HCT116 (cell line): ENCODE measurements at regions of chr22 and their contacts with region 1.

Region 1: DNA sequence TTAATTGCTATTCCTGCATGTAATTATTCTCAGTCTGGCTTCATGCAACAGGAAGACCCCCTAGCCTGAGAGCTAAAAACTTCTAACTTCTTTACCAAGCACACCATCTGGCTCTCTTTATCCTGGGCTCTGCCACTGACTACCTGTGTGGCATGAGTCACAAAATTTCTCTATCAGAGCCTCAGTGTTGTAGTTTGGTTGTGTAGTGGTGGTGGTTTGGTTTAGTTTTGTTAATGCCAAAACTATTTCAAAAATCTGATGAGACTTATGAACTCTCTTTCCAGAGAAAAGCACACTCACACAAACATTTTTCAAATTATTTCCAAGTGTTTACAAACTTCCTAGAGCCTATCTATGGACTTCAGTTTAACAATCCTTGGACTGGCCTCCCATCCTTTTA is 7.5 kb upstream of the IL17RA start:
- DNase-seq: no peak
- ATAC-seq: no peak; the same call in 1 of the 2 replicates
- H3K4me3 ChIP-seq: no peak overlapping the region
- H3K27ac ChIP-seq: no peak overlapping the region
- H3K4me1 ChIP-seq: peaks cover 9 to 24% of the 10 kb centered on the region in 2 experiments
- H3K27me3 ChIP-seq: no peaks in the 10 kb centered on the region
- CTCF ChIP-seq: no peak
- POLR2A ChIP-seq: no peak
- RAD21 ChIP-seq: no peak

Region 2: DNA sequence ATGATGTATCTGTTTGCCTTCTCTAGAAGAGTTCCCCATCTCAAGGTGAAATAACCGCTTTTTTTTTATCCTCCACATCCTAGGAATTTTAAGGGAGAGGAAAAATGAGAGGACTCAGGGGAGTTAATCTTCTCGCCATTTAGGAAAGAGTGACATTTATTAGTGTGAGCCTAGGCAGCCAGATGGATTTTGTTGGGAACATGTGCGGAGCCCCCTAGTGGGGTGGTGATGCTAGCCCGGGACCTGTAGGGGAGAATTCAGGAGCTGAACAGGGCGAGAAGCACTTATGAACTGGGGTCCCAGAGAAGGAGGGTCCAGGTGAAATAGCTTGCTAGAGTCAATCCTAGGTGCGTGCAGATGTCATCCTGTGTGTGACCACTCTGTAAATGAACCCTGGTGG is 18.3 kb after region 1 on chr22:
- CTCF ChIA-PET with region 1: interaction called, 10 read pairs
- POLR2A ChIA-PET with region 1: no interaction called
- RAD21 ChIA-PET with region 1: interaction called in 1 of 2 experiments, 4 read pairs
- intact Hi-C with region 1: no loop called
- DNase-seq: no peak
- ATAC-seq: peak; percentile 85
- H3K4me3 ChIP-seq: no peak overlapping the region
- H3K27ac ChIP-seq: no peak overlapping the region
- H3K4me1 ChIP-seq: no peaks in the 10 kb centered on the region
- H3K27me3 ChIP-seq: no peaks in the 10 kb centered on the region
- CTCF ChIP-seq: peak in 2 of 3 experiments; percentile 58 to 64; a peak in 4 of 6 replicates
- POLR2A ChIP-seq: no peak
- RAD21 ChIP-seq: no peak

Region 3: DNA sequence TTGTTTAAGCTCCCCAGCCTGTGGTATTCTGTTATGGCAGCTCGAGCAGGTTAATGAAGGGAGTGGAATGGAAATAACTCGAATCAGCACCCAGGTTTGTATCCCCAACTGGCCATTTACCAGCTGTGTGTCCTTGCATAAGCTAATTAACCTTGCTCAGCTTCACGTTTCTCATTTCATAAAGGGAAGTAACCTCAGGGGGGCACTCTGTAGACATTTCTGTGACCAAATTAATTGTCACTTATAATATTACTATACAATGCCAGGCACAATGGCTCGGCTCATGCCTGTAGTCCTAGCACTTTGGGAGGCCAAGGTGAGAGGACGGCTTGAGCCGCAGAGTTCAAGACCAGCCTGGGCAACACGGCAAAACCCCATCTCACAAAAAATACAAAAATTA is 128.2 kb after region 1 on chr22:
- CTCF ChIA-PET with region 1: interaction called, 14 read pairs
- POLR2A ChIA-PET with region 1: no interaction called
- RAD21 ChIA-PET with region 1: no interaction called
- intact Hi-C with region 1: no loop called
- DNase-seq: no peak
- ATAC-seq: peak; percentile 83
- H3K4me3 ChIP-seq: no peak overlapping the region
- H3K27ac ChIP-seq: no peak overlapping the region
- H3K4me1 ChIP-seq: no peaks in the 10 kb centered on the region
- H3K27me3 ChIP-seq: no peaks in the 10 kb centered on the region
- CTCF ChIP-seq: peak; percentile 5 to 28 (median 15); a peak in 4 of 6 replicates
- POLR2A ChIP-seq: no peak
- RAD21 ChIP-seq: peak; percentile 42